WTC11 (cell line): ENCODE measurements at regions of chr3 and their contacts with region 1.

Region 1: GRCh38 chr3:179224584-179224983 is 26.3 kb downstream of the KCNMB3 start:
- DNase-seq: no peak
- ATAC-seq: no peak
- H3K4me3 Mint-ChIP-seq: no peak overlapping the region
- H3K27ac Mint-ChIP-seq: no peak overlapping the region
- H3K4me1 Mint-ChIP-seq: 0 out of 2 replicates have a peak, but pooled peaks cover 6% of the 10 kb centered on the region
- H3K27me3 Mint-ChIP-seq: no peaks in the 10 kb centered on the region
- CTCF ChIP-seq: no peak

Region 2: DNA sequence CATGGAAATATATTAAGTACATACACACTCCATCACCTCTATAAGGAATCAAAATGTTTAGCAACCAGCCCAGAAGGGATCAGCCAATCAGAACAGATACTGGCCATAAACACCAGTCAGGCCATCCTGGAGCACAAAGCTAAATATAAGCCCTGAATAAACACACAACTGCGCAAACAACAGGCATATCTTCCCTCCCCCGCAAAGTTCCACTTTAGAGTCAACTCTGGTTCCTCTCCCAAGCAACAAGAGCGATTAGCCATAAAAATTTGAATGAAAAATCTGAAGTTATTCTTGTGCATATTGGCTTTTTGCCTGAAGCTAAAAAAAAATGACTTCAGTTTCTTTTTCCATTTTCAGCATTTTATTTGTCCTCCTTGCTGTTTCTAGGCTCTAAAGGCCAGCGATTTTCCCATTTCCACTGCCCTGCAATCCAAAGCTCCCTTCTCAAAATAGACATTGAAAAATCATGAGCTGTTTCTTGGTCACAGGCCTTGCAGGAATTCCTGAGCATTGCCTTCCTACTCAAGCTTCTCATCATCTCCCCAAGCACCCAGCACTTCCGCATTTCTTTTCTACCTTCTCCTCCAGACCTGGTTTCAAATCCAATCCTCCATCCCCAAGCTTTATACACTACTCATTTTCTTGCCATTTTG is 400.9 kb before region 1 on chr3:
- CTCF ChIA-PET with region 1: no interaction called
- POLR2A ChIA-PET with region 1: interaction called, 11 read pairs
- DNase-seq: no peak
- ATAC-seq: no peak
- H3K4me3 Mint-ChIP-seq: no peak overlapping the region
- H3K27ac Mint-ChIP-seq: peak overlapping the region; percentile 44; the same call in 1 of the 2 replicates
- H3K4me1 Mint-ChIP-seq: peaks cover 33% of the 10 kb centered on the region
- H3K27me3 Mint-ChIP-seq: no peaks in the 10 kb centered on the region
- CTCF ChIP-seq: no peak

Region 3: DNA sequence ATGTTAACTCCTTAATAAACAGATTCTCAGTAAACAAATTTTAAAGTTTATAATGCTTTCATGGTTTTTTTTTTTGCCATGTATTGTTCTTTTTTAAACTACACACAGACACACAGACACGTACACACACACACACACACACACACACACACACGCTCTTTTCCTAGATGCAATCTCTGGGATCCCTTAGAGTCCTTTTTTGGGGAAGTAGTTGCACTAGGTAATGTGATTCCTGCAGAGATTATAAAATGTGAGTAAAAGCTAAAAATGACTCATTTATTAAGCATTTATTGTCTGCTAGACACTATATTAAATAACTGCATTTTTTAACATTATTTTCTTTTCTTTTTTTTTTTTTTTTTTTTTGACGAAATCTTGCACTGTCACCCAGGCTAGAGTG is 399.9 kb after region 1 on chr3:
- CTCF ChIA-PET with region 1: no interaction called
- POLR2A ChIA-PET with region 1: no interaction called
- DNase-seq: no peak
- ATAC-seq: no peak
- H3K4me3 Mint-ChIP-seq: no peak overlapping the region
- H3K27ac Mint-ChIP-seq: no peak overlapping the region
- H3K4me1 Mint-ChIP-seq: no peaks in the 10 kb centered on the region; the same call in 1 of the 2 replicates
- H3K27me3 Mint-ChIP-seq: no peaks in the 10 kb centered on the region
- CTCF ChIP-seq: no peak